ENCODE measurements at regions of chr1 and their contacts with region 1.

Region 1: GRCh38 chr1:211133836-211134669 is at the start of gene KCNH1:
- DNase-seq: peak; percentile 52
- H3K4me3 ChIP-seq: peak within 1 kb of the TSS; percentile 31 to 39
- H3K27ac ChIP-seq: no peak within 1 kb of the TSS
- H3K4me1 ChIP-seq: no peaks in the 10 kb centered on the region
- H3K27me3 ChIP-seq: no peaks in the 10 kb centered on the region
- CTCF ChIP-seq: peak; percentile 80 to 93 (median 88)
- POLR2A ChIP-seq: no peak
- total RNA-seq, gene KCNH1: 0.68 to 1.2 TPM

Region 2: DNA sequence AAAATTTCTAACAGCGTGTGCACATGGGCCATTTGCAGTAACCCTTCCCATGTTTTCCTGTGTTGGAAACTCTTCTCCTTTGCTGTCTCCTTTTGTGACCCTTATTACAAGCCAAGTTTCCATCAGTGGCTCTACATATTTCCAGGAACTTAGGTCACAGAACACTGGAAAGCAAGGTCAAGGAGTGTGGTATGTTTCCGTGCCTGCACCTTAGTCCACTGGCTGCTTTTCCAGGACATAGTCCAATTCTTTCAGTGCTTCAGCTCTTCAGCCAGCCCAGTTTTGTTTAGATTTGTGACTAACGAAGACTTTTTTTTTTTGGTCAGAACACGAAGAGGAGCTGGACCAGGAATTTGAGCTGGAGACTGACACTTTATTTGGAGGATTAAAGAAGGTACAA is 771.5 kb before region 1 on chr1:
- intact Hi-C with region 1: loop called (anchors 5 kb)
- DNase-seq: no peak
- H3K4me3 ChIP-seq: no peak overlapping the region
- H3K27ac ChIP-seq: peak overlapping the region in 1 of 2 donors; percentile 34
- H3K4me1 ChIP-seq: peaks cover 3% of the 10 kb centered on the region
- H3K27me3 ChIP-seq: no peaks in the 10 kb centered on the region
- CTCF ChIP-seq: no peak
- POLR2A ChIP-seq: no peak

Region 3: DNA sequence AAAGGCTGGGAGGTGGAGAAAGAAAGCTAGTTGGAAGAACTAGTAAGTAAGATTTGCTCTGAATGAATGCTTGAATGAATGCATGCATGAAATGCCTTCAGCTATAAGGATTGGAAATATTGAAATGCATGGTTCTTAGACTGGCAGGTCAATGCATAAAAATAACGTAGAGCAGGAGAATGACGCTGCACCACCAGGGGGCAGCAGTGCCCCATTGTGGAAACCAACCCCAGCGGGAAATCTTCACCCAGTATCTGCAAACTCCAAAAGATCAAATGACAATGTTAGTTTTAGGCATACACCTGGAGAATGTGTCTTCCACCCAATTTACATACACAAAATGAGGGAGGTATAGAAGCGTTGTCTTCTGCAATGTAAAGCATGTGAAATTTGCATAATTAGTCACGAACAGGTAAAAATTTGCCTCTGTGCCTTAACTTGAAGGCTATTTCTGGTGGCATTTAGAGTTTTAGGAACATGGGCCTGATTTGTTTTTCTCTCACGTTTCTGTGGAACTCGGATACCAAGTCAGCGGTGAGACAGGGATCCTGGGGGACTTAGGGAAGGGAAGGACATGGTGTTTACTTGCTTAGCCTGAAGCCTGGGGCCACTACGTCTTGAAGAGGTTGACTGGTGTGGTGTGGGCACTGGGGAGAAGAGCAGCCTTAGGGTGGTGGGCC is 726.7 kb before region 1 on chr1:
- intact Hi-C with region 1: loop called (anchors 1 kb)
- DNase-seq: peak; percentile 65
- H3K4me3 ChIP-seq: no peak overlapping the region
- H3K27ac ChIP-seq: no peak overlapping the region
- H3K4me1 ChIP-seq: no peaks in the 10 kb centered on the region
- H3K27me3 ChIP-seq: no peaks in the 10 kb centered on the region
- CTCF ChIP-seq: peak; percentile 86 to 97 (median 93)
- POLR2A ChIP-seq: no peak

Region 4: GRCh38 chr1:210448297-210448892 is 685.7 kb before region 1 on chr1:
- intact Hi-C with region 1: loop called (anchors 2 kb)
- DNase-seq: peak; percentile 11
- H3K4me3 ChIP-seq: no peak overlapping the region
- H3K27ac ChIP-seq: no peak overlapping the region
- H3K4me1 ChIP-seq: no peaks in the 10 kb centered on the region
- H3K27me3 ChIP-seq: no peaks in the 10 kb centered on the region
- CTCF ChIP-seq: peak in 3 of 4 experiments; percentile 38 to 68 (median 55)
- POLR2A ChIP-seq: no peak

Region 5: GRCh38 chr1:210584439-210585113 is 549.5 kb before region 1 on chr1:
- intact Hi-C with region 1: loop called (anchors 2 kb)
- DNase-seq: peak; percentile 68
- H3K4me3 ChIP-seq: no peak overlapping the region
- H3K27ac ChIP-seq: no peak overlapping the region
- H3K4me1 ChIP-seq: no peaks in the 10 kb centered on the region
- H3K27me3 ChIP-seq: no peaks in the 10 kb centered on the region
- CTCF ChIP-seq: peak in 3 of 4 experiments; percentile 59 to 67 (median 60)
- POLR2A ChIP-seq: no peak